Activated CD4-positive, alpha-beta T cell treated with anti-CD3 and anti-CD28 coated beads, Interleukin-2, amount 10 ng/mL, durations not matched to agents 24 days and 14 days (primary cell): ENCODE measurements at regions of chr19 and their contacts with region 1.

Region 1: DNA sequence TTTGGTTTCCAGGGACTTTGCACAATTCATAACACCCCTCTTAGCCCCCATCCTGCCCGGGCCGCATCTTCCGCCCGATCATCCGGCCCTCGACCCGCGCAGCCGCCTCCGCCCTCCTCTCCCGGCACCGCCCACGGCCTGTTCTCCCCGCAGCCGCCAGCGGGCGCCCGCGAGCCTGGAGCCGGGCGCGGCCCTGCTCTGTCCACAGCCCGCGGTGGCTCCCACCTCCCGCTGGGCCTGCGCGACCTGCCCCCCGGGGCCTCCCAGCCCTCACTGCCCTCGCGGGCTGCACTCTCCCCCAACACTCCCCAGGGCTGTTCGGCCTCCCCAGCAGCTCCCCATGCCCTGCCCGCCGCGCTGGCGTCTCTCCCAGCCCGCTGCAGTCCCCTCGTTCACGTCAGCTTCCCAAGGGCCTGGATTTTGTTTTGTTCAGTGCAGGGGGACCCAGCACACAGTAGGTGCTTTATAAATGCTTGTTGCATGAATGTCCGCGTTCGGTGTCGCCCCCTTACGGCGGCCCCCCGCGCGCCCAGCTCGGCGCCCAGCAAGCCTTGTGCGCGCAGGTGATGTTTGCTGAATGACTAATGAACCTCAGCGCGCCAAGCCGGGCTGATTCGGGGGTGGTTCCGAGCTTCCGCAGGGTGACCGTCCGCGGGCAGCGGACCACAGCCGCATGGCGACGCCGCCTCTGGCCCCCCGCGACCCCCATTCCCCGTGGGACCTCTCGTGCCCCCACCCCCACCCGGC is 4.6 kb upstream of the APC2 start:
- DNase-seq: peak; percentile 96
- H3K4me3 Mint-ChIP-seq: peak overlapping the region; percentile 78
- H3K27ac Mint-ChIP-seq: no peak overlapping the region
- H3K4me1 Mint-ChIP-seq: peaks cover 10% of the 10 kb centered on the region
- H3K27me3 Mint-ChIP-seq: peaks cover 26% of the 10 kb centered on the region

Region 2: DNA sequence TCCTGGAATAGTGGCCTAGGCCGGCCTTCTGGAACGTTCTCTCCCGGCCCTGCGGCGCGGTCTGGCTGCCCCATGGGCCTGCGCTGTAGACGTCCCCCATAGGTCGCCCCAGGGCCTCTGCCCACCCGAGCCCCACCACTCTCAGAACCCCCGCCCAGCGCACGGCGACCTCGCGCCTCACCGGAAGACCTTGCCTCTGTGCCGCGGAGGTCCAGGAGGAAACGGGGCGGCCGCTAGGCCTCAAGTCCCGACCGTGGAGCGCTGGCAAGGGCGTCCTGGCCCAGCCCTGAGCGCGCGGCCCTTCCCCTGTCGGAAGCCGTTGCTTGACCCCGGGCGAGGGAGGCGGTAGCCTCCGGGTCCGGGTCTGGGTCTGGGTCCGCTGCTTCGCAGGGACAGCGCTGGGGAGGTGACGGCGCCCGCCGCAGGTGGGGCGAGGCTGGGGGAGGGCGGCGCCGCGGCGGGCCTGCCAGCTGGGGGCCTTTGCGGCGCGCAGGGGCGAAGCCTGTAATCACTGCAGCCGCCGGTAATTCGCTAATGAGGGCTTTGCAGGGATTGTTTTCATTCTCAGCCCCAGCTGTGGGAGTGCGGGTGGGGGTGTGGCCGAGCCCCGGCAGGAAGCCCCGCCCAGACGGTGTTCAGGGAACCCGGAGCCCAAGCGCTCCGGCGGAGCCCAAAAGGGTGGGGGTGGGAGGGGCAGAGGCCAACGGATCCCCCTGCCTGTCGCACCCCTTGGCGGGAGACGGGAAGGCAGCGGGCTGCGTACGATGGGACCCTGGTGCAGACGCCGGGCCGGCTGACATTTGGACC is 25.0 kb after region 1 on chr19:
- intact Hi-C with region 1: loop called (anchors 2 kb)
- DNase-seq: peak; percentile 94
- H3K4me3 Mint-ChIP-seq: peak overlapping the region; percentile 73
- H3K27ac Mint-ChIP-seq: no peak overlapping the region
- H3K4me1 Mint-ChIP-seq: peaks cover 2% of the 10 kb centered on the region
- H3K27me3 Mint-ChIP-seq: peaks cover 6% of the 10 kb centered on the region

Region 3: GRCh38 chr19:1513499-1514294 is 68.3 kb after region 1 on chr19:
- intact Hi-C with region 1: loop called (anchors 5 kb)
- DNase-seq: peak; percentile 91
- H3K4me3 Mint-ChIP-seq: peak overlapping the region; percentile 55
- H3K27ac Mint-ChIP-seq: no peak overlapping the region
- H3K4me1 Mint-ChIP-seq: peaks cover 2% of the 10 kb centered on the region
- H3K27me3 Mint-ChIP-seq: peaks cover 14% of the 10 kb centered on the region

Region 4: DNA sequence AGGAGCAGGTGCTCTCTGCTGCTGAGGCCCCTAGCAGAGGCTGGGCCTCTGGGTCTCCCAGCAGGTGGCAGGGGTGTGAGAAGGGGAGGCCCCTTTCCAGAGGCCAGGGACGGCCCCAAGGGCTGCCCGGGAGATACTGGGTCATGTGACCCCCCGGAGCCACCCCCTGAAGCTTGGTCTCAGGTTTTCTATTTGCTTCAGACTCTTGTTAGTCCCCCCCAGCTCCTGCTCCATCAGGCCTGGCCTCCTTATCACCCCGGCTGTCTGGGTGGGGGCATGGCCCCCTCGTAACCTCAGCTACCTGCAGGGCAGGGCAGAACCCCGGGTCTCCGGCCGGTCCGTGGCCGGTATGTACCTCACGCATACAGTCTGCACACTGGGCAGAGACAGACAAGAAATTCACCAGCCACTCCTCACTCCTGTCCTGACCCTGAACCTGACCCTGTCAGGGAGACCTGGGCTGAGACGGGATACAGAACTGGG is 220.2 kb after region 1 on chr19:
- intact Hi-C with region 1: no loop called
- DNase-seq: no peak
- H3K4me3 Mint-ChIP-seq: no peak overlapping the region
- H3K27ac Mint-ChIP-seq: no peak overlapping the region
- H3K4me1 Mint-ChIP-seq: peaks cover 7% of the 10 kb centered on the region
- H3K27me3 Mint-ChIP-seq: peaks cover 28% of the 10 kb centered on the region